Heart right ventricle (tissue), 16 donors: ENCODE measurements at regions of chr17 and their contacts with region 1.

Region 1: GRCh38 chr17:35373534-35373983 is at the start of gene SLFN11:
- DNase-seq: peak; percentile 83 to 92
- ATAC-seq: peak; percentile 96 to 98 (median 96)
- H3K4me3 ChIP-seq: peak within 1 kb of the TSS; percentile 50 to 76 (median 70)
- H3K27ac ChIP-seq: peak within 1 kb of the TSS; percentile 93 to 99 (median 97)
- H3K4me1 ChIP-seq: peaks cover 0 to 71% (median 20%) of the 10 kb centered on the region in 9 donors
- H3K27me3 ChIP-seq: peaks cover 0 to 17% (median 0%) of the 10 kb centered on the region in 7 donors
- CTCF ChIP-seq: no peak
- total RNA-seq, gene SLFN11: 11.5 to 25.7 (median 18.5) TPM

Region 2: GRCh38 chr17:35254107-35254802 is 119.3 kb before region 1 on chr17:
- intact Hi-C with region 1: loop called in 1 of 10 experiments (anchors 10 kb)
- DNase-seq: peak in 1 of 2 donors; percentile 73
- ATAC-seq: peak; percentile 83 to 96 (median 90)
- H3K4me3 ChIP-seq: no peak overlapping the region
- H3K27ac ChIP-seq: peak overlapping the region in 6 of 10 donors; percentile 13 to 78 (median 28)
- H3K4me1 ChIP-seq: peaks cover 0 to 66% (median 33%) of the 10 kb centered on the region in 9 donors
- H3K27me3 ChIP-seq: no peaks in the 10 kb centered on the region
- CTCF ChIP-seq: no peak

Region 3: GRCh38 chr17:35265566-35266141 is 107.9 kb before region 1 on chr17:
- intact Hi-C with region 1: no loop called
- DNase-seq: no peak
- ATAC-seq: no peak
- H3K4me3 ChIP-seq: no peak overlapping the region
- H3K27ac ChIP-seq: no peak overlapping the region
- H3K4me1 ChIP-seq: peaks cover 0 to 9% (median 0%) of the 10 kb centered on the region in 9 donors
- H3K27me3 ChIP-seq: no peaks in the 10 kb centered on the region
- CTCF ChIP-seq: no peak

Region 4: GRCh38 chr17:35432176-35433074 is 58.9 kb after region 1 on chr17 and contains the start of gene SLFN12:
- intact Hi-C with region 1: loop called in 4 of 10 experiments (anchors 2 to 10 kb)
- DNase-seq: peak in 1 of 2 donors; percentile 79
- ATAC-seq: peak; percentile 87 to 96 (median 92)
- H3K4me3 ChIP-seq: peak within 1 kb of the TSS; percentile 50 to 73 (median 64)
- H3K27ac ChIP-seq: peak within 1 kb of the TSS; percentile 83 to 95 (median 92)
- H3K4me1 ChIP-seq: peaks cover 0 to 52% (median 27%) of the 10 kb centered on the region in 9 donors
- H3K27me3 ChIP-seq: peaks cover 0 to 2% (median 0%) of the 10 kb centered on the region in 7 donors
- CTCF ChIP-seq: no peak
- total RNA-seq, gene SLFN12: 2.0 to 7.8 (median 4.0) TPM